Posterior vena cava (tissue), 2 donors: ENCODE measurements at regions of chr12 and their contacts with region 1.

Region 1: DNA sequence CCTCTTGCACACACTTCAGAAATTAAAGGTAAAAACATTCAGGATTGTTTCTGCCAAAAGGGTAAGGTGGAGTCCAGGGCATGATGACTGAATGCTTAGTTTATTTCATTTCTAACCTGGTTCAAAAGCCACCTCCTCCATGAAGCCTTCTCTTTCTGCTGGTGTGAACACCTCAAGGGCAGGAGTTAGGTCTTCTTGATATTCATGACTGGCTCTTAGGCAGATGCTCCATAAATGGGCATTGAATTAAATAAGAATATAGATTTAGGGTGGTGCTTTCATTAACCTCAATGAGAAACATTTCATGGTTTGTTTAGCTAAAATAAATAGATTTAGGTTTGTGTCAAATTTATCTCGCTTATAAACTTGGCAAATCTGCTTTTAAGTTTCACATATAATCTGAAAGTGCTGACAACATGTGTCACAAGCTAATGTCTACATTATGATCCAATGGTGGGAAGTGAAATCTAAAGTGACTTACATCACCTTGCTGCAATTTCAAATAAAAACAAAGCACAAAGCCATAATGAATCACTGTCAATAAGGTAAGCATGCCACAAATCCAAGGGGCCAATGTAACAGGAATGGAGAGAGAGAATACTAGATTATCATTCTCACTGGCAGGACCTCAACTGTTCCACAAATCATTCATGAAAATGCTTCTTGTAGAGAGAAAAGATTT is 72.7 kb upstream of the GRIP1 start:
- DNase-seq: no peak

Region 2: DNA sequence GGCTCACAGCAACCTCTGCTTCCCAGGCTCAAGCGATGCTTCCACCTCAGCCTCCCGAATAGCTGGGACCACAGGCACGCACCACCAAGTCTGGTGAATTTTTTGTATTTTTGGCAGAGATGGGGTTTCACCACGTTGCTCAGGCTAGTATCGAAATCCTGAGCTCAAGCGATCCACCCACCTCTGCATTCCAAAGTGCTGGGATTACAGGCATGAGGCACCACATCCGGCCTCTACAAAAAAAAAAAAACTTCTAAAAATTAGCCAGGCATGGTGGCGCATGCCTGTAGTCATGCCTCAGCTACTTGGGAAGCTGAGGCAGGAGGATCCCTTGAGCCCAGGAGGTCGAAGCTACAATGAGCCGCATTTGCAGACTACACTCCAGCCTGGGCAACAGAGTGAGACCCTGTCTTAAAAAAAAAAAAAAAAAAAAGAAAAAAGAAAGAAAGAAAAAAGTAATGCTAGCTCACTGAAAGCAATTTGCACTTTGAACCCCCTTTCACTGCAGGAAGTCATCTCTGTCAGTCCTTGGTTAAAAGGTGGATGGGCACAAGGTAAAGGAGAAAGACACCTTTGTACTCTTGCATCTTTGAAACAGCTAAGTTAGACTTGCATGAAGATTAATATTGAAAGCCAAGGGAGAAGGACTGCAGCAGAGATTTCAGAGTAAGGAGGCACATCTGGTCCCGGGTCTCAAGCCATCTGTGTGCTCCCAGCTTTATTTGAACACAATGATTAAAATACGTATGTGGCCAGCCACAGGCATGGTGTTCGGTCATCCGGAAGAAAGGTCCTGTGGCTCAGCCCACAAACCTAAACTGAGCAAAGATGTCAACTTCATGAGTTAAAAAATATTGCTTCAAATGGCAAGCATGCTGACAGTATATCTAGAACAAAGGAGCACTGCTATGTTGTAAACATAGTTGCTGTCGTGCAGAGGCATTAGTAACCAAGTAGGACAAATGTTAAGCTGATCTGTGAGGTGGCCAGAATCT is 1031.1 kb before region 1 on chr12:
- intact Hi-C with region 1: loop called in 1 of 2 experiments (anchors 5 kb)
- DNase-seq: no peak

Region 3: DNA sequence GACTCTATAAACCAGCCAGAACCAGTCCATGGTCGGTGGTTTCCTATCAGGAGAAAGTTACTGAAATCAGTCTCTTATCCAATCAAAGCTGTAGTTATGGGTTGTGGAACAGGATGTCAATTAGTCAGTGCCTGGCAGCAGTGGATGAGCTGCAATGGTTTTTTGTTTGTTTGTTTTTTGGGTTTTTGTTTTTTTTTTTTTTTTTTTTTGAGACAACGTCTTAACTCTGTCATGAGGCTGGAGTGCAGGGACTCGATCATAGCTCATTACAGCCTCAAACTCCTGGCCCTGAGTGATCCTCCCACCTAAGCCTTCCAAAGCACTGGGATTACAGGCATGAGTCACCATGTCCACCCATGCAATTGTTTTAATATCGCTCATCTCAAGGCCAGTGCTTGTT is 404.3 kb after region 1 on chr12:
- intact Hi-C with region 1: no loop called
- DNase-seq: no peak